ENCODE measurements at regions of chr17 and their contacts with region 1.

Region 1: DNA sequence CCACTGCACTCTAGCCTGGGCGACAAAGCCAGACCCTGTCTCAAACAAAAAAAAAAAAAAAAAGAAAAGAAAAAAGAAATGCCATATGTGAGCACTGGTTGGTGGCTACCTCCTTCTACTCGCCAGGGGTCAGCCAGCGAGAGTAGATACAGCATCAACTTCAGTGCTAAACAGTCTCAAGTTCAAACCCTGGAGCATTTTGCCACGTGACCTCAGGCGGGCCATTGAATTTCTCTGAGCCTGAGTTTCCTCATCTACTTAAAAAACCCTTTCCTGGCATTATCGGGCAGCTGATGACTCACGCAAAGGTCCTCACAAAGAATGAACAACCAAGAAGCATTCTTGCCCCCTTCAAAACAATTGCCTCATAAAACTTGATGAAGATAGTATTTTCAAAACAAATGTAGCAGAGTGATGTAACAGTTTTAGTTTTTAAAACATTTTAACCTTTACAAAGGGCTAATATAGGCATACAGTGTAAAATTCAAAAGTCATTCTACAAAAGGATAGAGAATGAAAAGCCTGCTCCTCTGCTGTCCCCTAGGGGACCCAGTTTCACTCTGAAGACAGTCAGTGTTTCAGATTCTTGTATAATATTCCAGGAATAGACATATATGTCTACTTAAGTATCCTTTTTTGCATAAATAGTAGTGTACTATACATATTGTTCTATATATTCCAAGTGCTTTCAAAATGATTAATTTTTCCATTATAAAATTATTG is 28.4 kb downstream of the DNAH2 start:
- DNase-seq: peak; percentile 22 to 58 (median 55)
- H3K4me3 ChIP-seq: no peak overlapping the region
- H3K27ac ChIP-seq: no peak overlapping the region
- H3K4me1 ChIP-seq: peaks cover 0 to 9% (median 1%) of the 10 kb centered on the region in 4 experiments
- H3K27me3 ChIP-seq: no peaks in the 10 kb centered on the region

Region 2: DNA sequence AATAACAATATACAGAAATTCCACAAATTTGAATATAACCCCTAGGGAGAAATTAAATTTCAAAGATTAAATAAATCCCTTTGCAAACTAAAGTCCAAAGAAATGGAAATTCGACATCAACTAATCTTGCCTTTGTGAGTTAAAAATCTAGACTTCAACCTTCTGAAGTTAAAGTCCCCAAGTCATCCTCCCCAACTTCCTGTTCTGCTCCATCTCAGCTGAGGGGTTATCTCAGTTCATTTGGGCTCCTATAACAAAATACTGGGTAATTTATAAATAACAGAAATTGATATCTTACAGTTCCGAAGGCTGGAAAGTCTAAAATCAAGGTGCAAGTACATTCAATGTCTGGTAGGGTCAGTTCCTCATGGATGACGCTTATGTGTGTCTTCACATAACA is 65.3 kb after region 1 on chr17:
- CTCF ChIA-PET with region 1: interaction called, 20 read pairs
- POLR2A ChIA-PET with region 1: no interaction called
- DNase-seq: peak; percentile 11 to 66 (median 51)
- H3K4me3 ChIP-seq: no peak overlapping the region
- H3K27ac ChIP-seq: no peak overlapping the region
- H3K4me1 ChIP-seq: peaks cover 2 to 7% (median 6%) of the 10 kb centered on the region in 4 experiments
- H3K27me3 ChIP-seq: no peaks in the 10 kb centered on the region

Region 3: DNA sequence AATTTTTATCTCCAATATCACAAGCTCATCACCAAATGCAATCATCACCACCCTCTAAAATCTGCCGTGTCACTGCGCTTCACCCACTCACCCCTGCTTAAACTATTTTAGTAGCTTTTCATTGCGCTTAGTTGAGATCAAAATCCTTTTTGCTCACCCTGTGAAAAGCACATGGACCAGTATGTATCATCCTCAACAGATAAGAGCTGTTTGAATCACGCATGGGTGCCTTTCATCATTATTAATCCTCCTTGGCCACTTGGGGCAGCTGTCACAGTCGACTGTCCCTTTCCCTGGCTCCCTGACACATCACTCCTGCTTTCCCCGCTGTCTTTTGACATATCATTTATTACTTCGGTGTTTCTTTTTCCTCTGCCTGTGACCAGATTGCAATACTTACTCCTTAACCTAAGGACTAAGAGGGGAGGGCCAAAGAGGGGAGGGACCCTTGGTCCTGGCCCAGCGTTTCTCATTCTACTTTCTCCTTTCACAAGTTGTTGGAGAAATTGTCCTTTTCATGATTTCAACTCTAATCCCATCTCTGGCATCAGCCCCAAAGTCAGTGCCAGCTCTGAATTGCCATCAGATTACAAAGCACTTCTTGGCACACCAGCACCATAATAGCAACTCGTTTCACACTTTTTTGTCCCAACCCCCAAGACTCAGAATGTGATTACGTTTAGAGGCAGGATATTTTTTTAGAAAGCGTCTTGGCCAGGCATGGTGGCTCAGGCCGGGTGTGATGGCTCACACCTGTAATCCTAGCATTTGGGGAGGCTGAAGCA is 79.5 kb after region 1 on chr17:
- CTCF ChIA-PET with region 1: interaction called, 12 read pairs
- POLR2A ChIA-PET with region 1: no interaction called
- DNase-seq: peak in 1 of 3 donors; percentile 15
- H3K4me3 ChIP-seq: no peak overlapping the region
- H3K27ac ChIP-seq: no peak overlapping the region
- H3K4me1 ChIP-seq: no peaks in the 10 kb centered on the region
- H3K27me3 ChIP-seq: peaks cover 0 to 2% (median 0%) of the 10 kb centered on the region in 5 experiments

Region 4: GRCh38 chr17:7856883-7857723 is 111.2 kb after region 1 on chr17 and contains the start of gene NAA38:
- CTCF ChIA-PET with region 1: interaction called, 10 read pairs
- POLR2A ChIA-PET with region 1: no interaction called
- DNase-seq: peak; percentile 99 to 100 (median 100)
- H3K4me3 ChIP-seq: peak within 1 kb of the TSS; percentile 56 to 93 (median 86)
- H3K27ac ChIP-seq: peak within 1 kb of the TSS; percentile 88 to 93
- H3K4me1 ChIP-seq: peaks cover 5 to 42% (median 38%) of the 10 kb centered on the region in 4 experiments
- H3K27me3 ChIP-seq: no peaks in the 10 kb centered on the region

Measured in common myeloid progenitor, CD34-positive (primary cell).